Naive thymus-derived CD4-positive, alpha-beta T cell (primary cell): ENCODE measurements at regions of chr11 and their contacts with region 1.

Region 1: DNA sequence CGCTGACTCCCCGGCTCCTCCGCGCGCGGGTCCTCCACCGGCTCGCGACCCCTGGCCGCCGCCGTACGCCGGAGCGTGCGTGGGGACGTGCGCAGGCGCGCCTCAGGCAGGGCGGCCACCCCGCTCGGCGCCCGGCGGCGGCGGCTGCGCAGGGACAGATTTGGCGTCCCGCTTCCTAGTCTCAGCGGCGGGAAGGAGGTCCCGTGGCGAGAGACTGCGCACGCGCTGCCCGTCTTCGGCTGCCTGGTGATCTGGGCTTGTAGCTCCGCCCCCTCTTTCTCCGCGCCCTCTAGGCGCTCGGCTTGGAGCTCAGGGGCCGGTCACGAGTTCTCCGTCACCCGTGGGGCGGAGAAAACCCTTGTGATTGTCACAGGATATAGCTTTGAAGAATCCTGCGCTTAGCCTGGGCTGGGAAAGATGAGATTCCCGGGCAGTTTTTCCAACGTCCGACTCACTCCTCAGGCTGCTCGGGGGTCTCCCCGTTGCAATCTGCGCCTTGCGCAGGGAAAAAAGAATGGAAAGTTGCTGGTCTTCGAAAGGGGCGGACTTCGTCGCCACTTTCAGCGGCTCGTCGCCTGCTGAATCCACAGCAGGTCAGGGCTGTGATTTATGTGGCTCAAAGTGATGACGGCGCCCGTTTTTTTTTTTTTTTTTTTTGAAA is at the start of gene PATL1:
- DNase-seq: peak; percentile 96 to 100 (median 99)
- ATAC-seq: peak; percentile 94
- H3K4me3 ChIP-seq: peak within 1 kb of the TSS; percentile 94
- H3K4me3 Mint-ChIP-seq: peak within 1 kb of the TSS; percentile 83 to 100 (median 96)
- H3K27ac ChIP-seq: peak within 1 kb of the TSS; percentile 98
- H3K27ac Mint-ChIP-seq: peak within 1 kb of the TSS; percentile 97 to 100 (median 99)
- H3K4me1 ChIP-seq: peaks cover 17 to 23% of the 10 kb centered on the region in 2 donors
- H3K4me1 Mint-ChIP-seq: peaks cover 32 to 50% (median 41%) of the 10 kb centered on the region in 7 donors
- H3K27me3 ChIP-seq: no peaks in the 10 kb centered on the region
- H3K27me3 Mint-ChIP-seq: peaks cover 0 to 2% (median 0%) of the 10 kb centered on the region in 5 donors
- total RNA-seq, gene PATL1: 40.6 to 60.1 (median 45.3) TPM

Region 2: GRCh38 chr11:58726737-58727414 is 942.2 kb before region 1 on chr11:
- CTCF ChIA-PET with region 1: no interaction called
- POLR2A ChIA-PET with region 1: no interaction called
- intact Hi-C with region 1: no loop called
- DNase-seq: peak in 7 of 9 donors; percentile 39 to 79 (median 73)
- ATAC-seq: peak; percentile 84
- H3K4me3 ChIP-seq: no peak overlapping the region
- H3K4me3 Mint-ChIP-seq: peak overlapping the region; percentile 33 to 86 (median 62)
- H3K27ac ChIP-seq: peak overlapping the region; percentile 60
- H3K27ac Mint-ChIP-seq: peak overlapping the region; percentile 58 to 99 (median 97)
- H3K4me1 ChIP-seq: peaks cover 4 to 41% of the 10 kb centered on the region in 2 donors
- H3K4me1 Mint-ChIP-seq: peaks cover 16 to 67% (median 54%) of the 10 kb centered on the region in 7 donors
- H3K27me3 ChIP-seq: no peaks in the 10 kb centered on the region
- H3K27me3 Mint-ChIP-seq: no peaks in the 10 kb centered on the region

Region 3: GRCh38 chr11:59550368-59550841 is 118.7 kb before region 1 on chr11:
- CTCF ChIA-PET with region 1: no interaction called
- POLR2A ChIA-PET with region 1: interaction called, 24 read pairs
- intact Hi-C with region 1: loop called (anchors 1 kb)
- DNase-seq: peak; percentile 67 to 95 (median 89)
- ATAC-seq: peak; percentile 92
- H3K4me3 ChIP-seq: peak overlapping the region; percentile 59
- H3K4me3 Mint-ChIP-seq: peak overlapping the region; percentile 70 to 98 (median 92)
- H3K27ac ChIP-seq: peak overlapping the region; percentile 66
- H3K27ac Mint-ChIP-seq: peak overlapping the region; percentile 89 to 100 (median 98)
- H3K4me1 ChIP-seq: peaks cover under 1 to 4% of the 10 kb centered on the region in 2 donors
- H3K4me1 Mint-ChIP-seq: peaks cover 0 to 40% (median 32%) of the 10 kb centered on the region in 7 donors
- H3K27me3 ChIP-seq: no peaks in the 10 kb centered on the region
- H3K27me3 Mint-ChIP-seq: peaks cover 0 to 28% (median 0%) of the 10 kb centered on the region in 5 donors

Region 4: GRCh38 chr11:59615637-59616395 is 53.3 kb before region 1 on chr11 and contains the start of gene OSBP:
- CTCF ChIA-PET with region 1: interaction called, 6 read pairs
- POLR2A ChIA-PET with region 1: interaction called, 89 read pairs
- intact Hi-C with region 1: loop called (anchors 1 kb)
- DNase-seq: peak; percentile 86 to 100 (median 99)
- ATAC-seq: peak; percentile 84
- H3K4me3 ChIP-seq: peak within 1 kb of the TSS; percentile 72
- H3K4me3 Mint-ChIP-seq: peak within 1 kb of the TSS; percentile 82 to 99 (median 94)
- H3K27ac ChIP-seq: peak within 1 kb of the TSS; percentile 93
- H3K27ac Mint-ChIP-seq: peak within 1 kb of the TSS; percentile 84 to 98 (median 94)
- H3K4me1 ChIP-seq: peaks cover 26 to 29% of the 10 kb centered on the region in 2 donors
- H3K4me1 Mint-ChIP-seq: peaks cover 35 to 54% (median 41%) of the 10 kb centered on the region in 7 donors
- H3K27me3 ChIP-seq: no peaks in the 10 kb centered on the region
- H3K27me3 Mint-ChIP-seq: no peaks in the 10 kb centered on the region
- total RNA-seq, gene OSBP: 39.8 to 57.6 (median 52.4) TPM

Region 5: DNA sequence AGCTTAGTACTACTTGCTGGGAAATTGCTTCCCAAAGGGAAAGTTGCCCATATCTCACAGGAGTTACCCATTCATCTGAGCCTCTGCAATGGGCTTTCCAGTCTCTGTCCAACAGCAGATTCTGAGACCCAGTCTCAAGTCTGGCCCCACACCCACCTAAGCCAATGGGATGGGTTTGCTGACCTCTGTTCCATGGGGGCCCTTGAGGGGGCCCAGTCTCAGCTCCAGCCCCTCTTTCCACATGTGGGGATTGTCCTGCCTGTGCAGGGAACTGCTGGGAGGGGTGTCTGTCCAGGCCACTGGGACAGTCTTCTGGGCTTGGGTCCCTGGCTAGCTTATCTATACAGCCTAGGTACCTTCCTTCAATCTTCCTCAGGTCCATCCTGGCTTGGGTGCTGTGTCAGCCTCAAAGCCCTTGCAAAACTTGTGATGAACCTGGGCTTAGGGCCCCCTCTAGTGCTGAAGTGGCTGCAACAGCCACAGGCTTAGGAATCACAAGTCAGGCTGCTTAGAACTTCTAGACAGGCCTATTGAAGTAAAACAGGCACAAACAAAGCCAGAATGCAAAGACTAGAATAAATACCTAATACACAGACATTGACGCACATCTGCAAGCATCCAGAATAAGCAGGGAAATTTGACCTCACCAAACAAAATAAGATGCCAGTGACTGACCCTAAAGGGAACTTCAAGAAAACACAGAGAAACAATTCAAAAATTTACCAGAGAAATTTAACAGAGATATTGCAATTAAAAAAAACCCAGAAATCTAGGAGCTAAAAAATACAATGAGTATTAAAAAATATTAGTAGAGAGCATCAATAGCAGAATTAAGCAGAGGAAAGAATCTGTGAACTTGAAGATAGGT is 11.4 kb after region 1 on chr11:
- CTCF ChIA-PET with region 1: no interaction called
- POLR2A ChIA-PET with region 1: interaction called, 10 read pairs
- intact Hi-C with region 1: no loop called
- DNase-seq: peak in 8 of 9 donors; percentile 43 to 66 (median 58)
- ATAC-seq: peak; percentile 97
- H3K4me3 ChIP-seq: no peak overlapping the region
- H3K4me3 Mint-ChIP-seq: no peak overlapping the region
- H3K27ac ChIP-seq: no peak overlapping the region
- H3K27ac Mint-ChIP-seq: no peak overlapping the region
- H3K4me1 ChIP-seq: no peaks in the 10 kb centered on the region
- H3K4me1 Mint-ChIP-seq: no peaks in the 10 kb centered on the region
- H3K27me3 ChIP-seq: no peaks in the 10 kb centered on the region
- H3K27me3 Mint-ChIP-seq: peaks cover 18 to 39% (median 23%) of the 10 kb centered on the region in 5 donors

Region 6: GRCh38 chr11:59802639-59803176 is 133.6 kb after region 1 on chr11:
- CTCF ChIA-PET with region 1: no interaction called
- POLR2A ChIA-PET with region 1: no interaction called
- intact Hi-C with region 1: loop called in 1 of 2 experiments (anchors 1 kb)
- DNase-seq: peak in 7 of 9 donors; percentile 43 to 70 (median 65)
- ATAC-seq: peak; percentile 81
- H3K4me3 ChIP-seq: no peak overlapping the region
- H3K4me3 Mint-ChIP-seq: no peak overlapping the region
- H3K27ac ChIP-seq: no peak overlapping the region
- H3K27ac Mint-ChIP-seq: peak overlapping the region in 1 of 9 donors; percentile 45
- H3K4me1 ChIP-seq: no peaks in the 10 kb centered on the region
- H3K4me1 Mint-ChIP-seq: peaks cover 0 to 26% (median 0%) of the 10 kb centered on the region in 7 donors
- H3K27me3 ChIP-seq: no peaks in the 10 kb centered on the region
- H3K27me3 Mint-ChIP-seq: no peaks in the 10 kb centered on the region

Region 7: GRCh38 chr11:59833602-59834001 is 164.5 kb after region 1 on chr11:
- CTCF ChIA-PET with region 1: no interaction called
- POLR2A ChIA-PET with region 1: no interaction called
- intact Hi-C with region 1: no loop called
- DNase-seq: no peak
- ATAC-seq: no peak
- H3K4me3 ChIP-seq: no peak overlapping the region
- H3K4me3 Mint-ChIP-seq: no peak overlapping the region
- H3K27ac ChIP-seq: no peak overlapping the region
- H3K27ac Mint-ChIP-seq: no peak overlapping the region
- H3K4me1 ChIP-seq: no peaks in the 10 kb centered on the region
- H3K4me1 Mint-ChIP-seq: no peaks in the 10 kb centered on the region
- H3K27me3 ChIP-seq: no peaks in the 10 kb centered on the region
- H3K27me3 Mint-ChIP-seq: peaks cover 0 to 10% (median 7%) of the 10 kb centered on the region in 5 donors

Region 8: GRCh38 chr11:61429691-61430582 is 1760.9 kb after region 1 on chr11 and contains the starts of genes CPSF7 and SDHAF2:
- CTCF ChIA-PET with region 1: no interaction called
- POLR2A ChIA-PET with region 1: no interaction called
- intact Hi-C with region 1: loop called in 1 of 2 experiments (anchors 5 kb)
- DNase-seq: peak; percentile 96 to 99 (median 97)
- ATAC-seq: peak; percentile 93
- H3K4me3 ChIP-seq: peak within 1 kb of the TSS; percentile 91
- H3K4me3 Mint-ChIP-seq: peak within 1 kb of the TSS; percentile 89 to 100 (median 97)
- H3K27ac ChIP-seq: peak within 1 kb of the TSS; percentile 98
- H3K27ac Mint-ChIP-seq: peak within 1 kb of the TSS; percentile 97 to 100 (median 99)
- H3K4me1 ChIP-seq: peaks cover 20 to 33% of the 10 kb centered on the region in 2 donors
- H3K4me1 Mint-ChIP-seq: peaks cover 31 to 86% (median 69%) of the 10 kb centered on the region in 7 donors
- H3K27me3 ChIP-seq: no peaks in the 10 kb centered on the region
- H3K27me3 Mint-ChIP-seq: peaks cover 0 to 2% (median 0%) of the 10 kb centered on the region in 5 donors
- total RNA-seq, gene CPSF7: 96.0 to 174 (median 113) TPM
- total RNA-seq, gene SDHAF2: 36.1 to 56.6 (median 48.2) TPM